Transverse colon (tissue), 4 donors: ENCODE measurements at regions of chr10 and their contacts with region 1.

Region 1: GRCh38 chr10:5813287-5814109 is at the start of gene GDI2:
- DNase-seq: peak; percentile 98
- H3K4me3 ChIP-seq: peak within 1 kb of the TSS; percentile 76 to 97 (median 94)
- H3K27ac ChIP-seq: peak within 1 kb of the TSS; percentile 98 to 100 (median 100)
- H3K4me1 ChIP-seq: peaks cover 18 to 46% (median 39%) of the 10 kb centered on the region in 4 donors
- H3K27me3 ChIP-seq: no peaks in the 10 kb centered on the region
- CTCF ChIP-seq: no peak
- EP300 ChIP-seq: no peak
- POLR2A ChIP-seq: peak; percentile 99
- total RNA-seq, gene GDI2: 122 to 270 (median 203) TPM

Region 2: GRCh38 chr10:5548527-5549223 is 264.8 kb before region 1 on chr10:
- in situ Hi-C with region 1: no loop called
- intact Hi-C with region 1: loop called (anchors 5 kb)
- DNase-seq: peak; percentile 81
- H3K4me3 ChIP-seq: peak overlapping the region in 1 of 4 donors; percentile 31
- H3K27ac ChIP-seq: peak overlapping the region; percentile 86 to 93 (median 90)
- H3K4me1 ChIP-seq: peaks cover 30 to 90% (median 66%) of the 10 kb centered on the region in 4 donors
- H3K27me3 ChIP-seq: no peaks in the 10 kb centered on the region
- CTCF ChIP-seq: no peak
- EP300 ChIP-seq: no peak
- POLR2A ChIP-seq: peak; percentile 49

Region 3: GRCh38 chr10:5873515-5873995 is 60.1 kb after region 1 on chr10:
- in situ Hi-C with region 1: loop called in 2 of 4 experiments (anchors 10 kb)
- intact Hi-C with region 1: no loop called
- DNase-seq: peak; percentile 76
- H3K4me3 ChIP-seq: no peak overlapping the region
- H3K27ac ChIP-seq: no peak overlapping the region
- H3K4me1 ChIP-seq: peaks cover 0 to 6% (median 0%) of the 10 kb centered on the region in 4 donors
- H3K27me3 ChIP-seq: no peaks in the 10 kb centered on the region
- CTCF ChIP-seq: peak; percentile 73 to 83 (median 79)
- EP300 ChIP-seq: no peak
- POLR2A ChIP-seq: no peak